Gastrocnemius medialis (tissue), 4 donors: ENCODE measurements at regions of chr1 and their contacts with region 1.

Region 1: DNA sequence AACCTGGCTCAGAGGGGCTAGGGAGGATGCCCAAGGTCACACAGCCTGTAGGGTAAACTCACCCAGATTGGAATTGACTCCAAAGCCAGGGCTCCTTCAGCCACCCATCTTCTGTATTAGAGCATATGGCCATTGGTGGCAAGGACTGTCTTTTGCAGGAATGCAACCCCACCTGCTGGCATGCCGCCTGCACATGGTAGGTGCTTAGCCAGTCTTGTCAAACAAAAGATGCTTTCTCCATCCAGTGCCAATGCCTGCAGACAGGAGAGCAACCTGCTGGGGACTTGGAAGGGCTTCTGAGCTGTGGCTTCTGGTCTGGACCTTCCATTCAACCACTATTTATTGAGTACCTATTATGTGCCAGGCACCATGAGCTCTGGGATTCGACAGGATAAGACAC is 95.3 kb upstream of the TMEM51 start:
- DNase-seq: no peak
- ATAC-seq: no peak
- H3K4me3 ChIP-seq: no peak overlapping the region
- H3K27ac ChIP-seq: no peak overlapping the region
- H3K4me1 ChIP-seq: no peaks in the 10 kb centered on the region
- H3K27me3 ChIP-seq: no peaks in the 10 kb centered on the region
- CTCF ChIP-seq: no peak
- POLR2A ChIP-seq: no peak

Region 2: DNA sequence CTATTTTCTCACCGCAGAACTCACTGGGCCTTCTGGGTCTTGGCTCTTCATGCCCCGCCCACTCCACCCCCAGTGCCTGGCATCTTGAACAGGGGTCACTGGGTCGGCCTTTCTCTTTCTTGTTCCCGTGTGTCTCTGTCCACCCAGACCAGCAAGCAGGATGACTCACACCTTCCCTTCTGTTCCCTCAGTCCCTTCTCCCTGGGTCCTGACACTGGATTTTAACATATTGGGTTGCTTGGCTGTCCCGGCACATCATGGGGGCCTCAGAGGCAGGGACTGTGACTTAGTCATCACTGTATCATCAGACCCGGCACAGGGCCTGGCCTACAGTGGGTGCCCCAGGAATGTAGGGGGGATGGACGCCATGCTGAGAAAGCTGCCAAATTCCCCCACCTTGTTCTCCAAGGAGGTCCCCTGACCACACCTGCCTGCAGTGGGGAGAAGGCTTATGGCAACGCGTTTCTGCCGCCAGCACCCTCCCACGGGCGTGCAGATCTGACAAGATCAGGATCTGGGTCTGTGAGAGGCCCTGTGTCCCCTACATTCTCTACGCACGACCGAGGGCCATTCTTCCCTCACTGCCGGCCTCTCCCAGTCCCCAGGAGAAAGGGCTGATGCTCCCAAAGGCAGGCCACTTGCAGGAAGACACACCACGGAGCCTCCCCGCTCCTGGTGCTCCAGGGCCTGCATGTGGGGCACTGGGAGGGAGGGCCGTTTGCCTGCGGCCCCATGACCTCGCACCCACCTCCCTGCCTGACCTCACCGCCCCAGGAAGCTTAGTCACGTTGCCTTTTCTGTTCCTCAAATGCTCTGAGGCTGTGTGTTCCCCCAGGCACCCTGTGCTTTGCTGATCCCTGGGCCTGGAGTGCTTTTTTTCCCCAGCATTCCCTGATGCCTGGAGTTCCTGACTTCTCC is 61.9 kb before region 1 on chr1:
- in situ Hi-C with region 1: no loop called
- intact Hi-C with region 1: no loop called
- DNase-seq: no peak
- ATAC-seq: no peak
- H3K4me3 ChIP-seq: no peak overlapping the region
- H3K27ac ChIP-seq: no peak overlapping the region
- H3K4me1 ChIP-seq: no peaks in the 10 kb centered on the region
- H3K27me3 ChIP-seq: no peaks in the 10 kb centered on the region
- CTCF ChIP-seq: no peak
- POLR2A ChIP-seq: no peak

Region 3: DNA sequence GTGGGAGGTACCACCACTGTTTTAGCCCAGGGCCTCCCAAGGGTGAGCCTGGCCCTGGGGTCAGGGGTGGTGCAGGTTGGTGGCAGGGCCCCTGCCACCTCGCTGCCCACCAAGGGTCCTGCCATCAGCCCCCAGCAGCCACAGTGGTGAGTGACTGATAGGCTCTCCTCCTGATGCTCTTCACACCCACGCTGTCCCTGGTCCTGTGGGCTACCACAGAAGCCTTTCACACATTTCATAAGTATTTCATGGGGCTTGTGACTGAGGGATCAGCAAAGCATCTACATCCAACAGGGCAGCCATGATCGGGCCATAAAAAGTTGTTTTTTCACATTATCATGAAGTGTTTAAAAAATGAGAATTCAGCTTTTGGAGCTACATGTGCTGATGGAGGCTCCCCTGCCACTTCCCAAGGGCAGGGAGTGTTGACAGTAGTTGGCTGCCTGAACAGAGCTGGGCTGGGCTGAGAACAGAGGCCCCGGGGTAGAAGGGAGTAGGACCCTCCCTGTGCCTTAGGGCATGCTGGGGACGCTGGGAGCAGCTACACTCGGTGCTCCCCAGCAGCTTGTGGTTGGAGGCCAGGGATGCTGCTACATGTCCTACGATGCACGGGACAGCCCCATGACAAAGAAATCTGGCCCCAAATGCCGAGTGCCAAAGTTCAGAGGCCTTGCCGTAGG is 22.2 kb after region 1 on chr1:
- in situ Hi-C with region 1: no loop called
- intact Hi-C with region 1: loop called (anchors 1 kb)
- DNase-seq: no peak
- ATAC-seq: no peak
- H3K4me3 ChIP-seq: no peak overlapping the region
- H3K27ac ChIP-seq: no peak overlapping the region
- H3K4me1 ChIP-seq: no peaks in the 10 kb centered on the region
- H3K27me3 ChIP-seq: no peaks in the 10 kb centered on the region
- CTCF ChIP-seq: no peak
- POLR2A ChIP-seq: no peak